Activated CD4-positive, alpha-beta T cell treated with anti-CD3 and anti-CD28 coated beads, Interleukin-2, amount 10 ng/mL, durations not matched to agents 24 days and 14 days (primary cell): ENCODE measurements at regions of chr14 and their contacts with region 1.

Region 1: GRCh38 chr14:75126679-75127473 is at the start of gene NEK9:
- DNase-seq: peak; percentile 97
- H3K4me3 Mint-ChIP-seq: peak within 1 kb of the TSS; percentile 97
- H3K27ac Mint-ChIP-seq: peak within 1 kb of the TSS; percentile 98
- H3K4me1 Mint-ChIP-seq: peaks cover 32% of the 10 kb centered on the region
- H3K27me3 Mint-ChIP-seq: no peaks in the 10 kb centered on the region
- total RNA-seq, gene NEK9: 66.6 and 68.8 TPM in 2 replicates

Region 2: GRCh38 chr14:75176142-75176820 is 49.4 kb after region 1 on chr14 and contains the start of gene TMED10:
- intact Hi-C with region 1: loop called (anchors 1 kb)
- DNase-seq: peak; percentile 97
- H3K4me3 Mint-ChIP-seq: peak within 1 kb of the TSS; percentile 92
- H3K27ac Mint-ChIP-seq: peak within 1 kb of the TSS; percentile 98
- H3K4me1 Mint-ChIP-seq: peaks cover 27% of the 10 kb centered on the region
- H3K27me3 Mint-ChIP-seq: peaks cover 8% of the 10 kb centered on the region
- total RNA-seq, gene TMED10: 192 and 200 TPM in 2 replicates

Region 3: DNA sequence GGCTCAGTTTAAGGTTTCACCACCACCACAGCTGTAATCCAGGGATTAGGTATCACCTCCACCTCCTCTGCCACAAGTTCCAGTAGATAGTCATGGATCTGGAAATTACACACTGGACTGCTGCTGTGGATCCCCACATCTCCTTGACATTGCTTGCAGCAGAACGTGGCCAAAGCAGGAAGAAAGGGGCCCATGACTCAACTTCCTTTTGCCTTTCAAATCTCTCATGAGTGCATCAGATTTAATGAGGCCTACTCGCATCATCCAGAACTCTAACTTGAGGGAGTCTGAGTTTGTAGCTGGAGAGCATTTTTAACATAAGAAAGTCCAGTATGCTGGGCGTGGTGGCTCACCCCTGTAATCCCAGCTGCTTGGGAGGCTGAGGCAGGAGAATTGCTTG is 78.7 kb after region 1 on chr14:
- intact Hi-C with region 1: no loop called
- DNase-seq: peak; percentile 62
- H3K4me3 Mint-ChIP-seq: no peak overlapping the region
- H3K27ac Mint-ChIP-seq: peak overlapping the region; percentile 80
- H3K4me1 Mint-ChIP-seq: peaks cover 25% of the 10 kb centered on the region
- H3K27me3 Mint-ChIP-seq: peaks cover 9% of the 10 kb centered on the region

Region 4: DNA sequence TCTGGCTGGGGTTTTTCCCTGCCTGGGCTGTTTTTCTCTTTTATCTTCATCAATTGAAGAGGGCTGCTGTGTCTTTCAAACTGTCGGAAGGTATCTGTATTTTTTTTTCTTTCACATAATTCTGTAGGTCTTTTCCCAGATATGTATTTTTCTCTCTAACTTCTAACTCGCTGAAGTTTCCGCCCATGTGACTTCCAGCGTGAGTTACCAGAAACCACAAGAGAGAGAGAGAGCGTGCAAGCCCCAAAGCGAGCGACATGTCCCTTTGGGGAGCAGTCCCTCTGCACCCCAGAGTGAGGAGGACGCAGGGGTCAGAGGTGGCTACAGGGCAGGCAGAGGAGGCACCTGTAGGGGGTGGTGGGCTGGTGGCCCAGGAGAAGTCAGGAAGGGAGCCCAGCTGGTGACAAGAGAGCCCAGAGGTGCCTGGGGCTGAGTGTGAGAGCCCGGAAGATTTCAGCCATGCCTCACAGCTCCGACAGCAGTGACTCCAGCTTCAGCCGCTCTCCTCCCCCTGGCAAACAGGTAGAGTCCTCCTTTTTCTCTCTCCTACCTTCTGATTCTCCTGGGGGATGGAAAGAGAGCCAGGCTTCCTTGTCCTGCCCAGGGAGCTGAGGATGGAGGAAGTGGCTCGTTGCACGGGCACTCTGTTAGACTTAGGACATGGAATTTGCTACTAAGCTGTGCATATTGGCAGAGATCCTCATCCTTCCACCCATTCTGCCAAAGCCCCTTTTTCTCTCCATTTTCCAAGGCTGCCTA is 395.5 kb after region 1 on chr14 and contains the start of gene BATF:
- intact Hi-C with region 1: loop called (anchors 5 kb)
- DNase-seq: peak; percentile 95
- H3K4me3 Mint-ChIP-seq: peak within 1 kb of the TSS; percentile 100
- H3K27ac Mint-ChIP-seq: peak within 1 kb of the TSS; percentile 100
- H3K4me1 Mint-ChIP-seq: peaks cover 63% of the 10 kb centered on the region
- H3K27me3 Mint-ChIP-seq: no peaks in the 10 kb centered on the region
- total RNA-seq, gene BATF: 175 and 178 TPM in 2 replicates

Region 5: GRCh38 chr14:75660630-75661494 is 534.0 kb after region 1 on chr14 and contains the starts of genes ERG28 and TTLL5:
- intact Hi-C with region 1: loop called (anchors 5 kb)
- DNase-seq: peak; percentile 99
- H3K4me3 Mint-ChIP-seq: peak within 1 kb of the TSS; percentile 95
- H3K27ac Mint-ChIP-seq: peak within 1 kb of the TSS; percentile 92
- H3K4me1 Mint-ChIP-seq: peaks cover 21% of the 10 kb centered on the region
- H3K27me3 Mint-ChIP-seq: no peaks in the 10 kb centered on the region
- total RNA-seq, gene ERG28: 20.3 and 20.6 TPM in 2 replicates
- total RNA-seq, gene TTLL5: 31.7 and 35.5 TPM in 2 replicates